ENCODE measurements at regions of chr2 and their contacts with region 1.

Region 1: DNA sequence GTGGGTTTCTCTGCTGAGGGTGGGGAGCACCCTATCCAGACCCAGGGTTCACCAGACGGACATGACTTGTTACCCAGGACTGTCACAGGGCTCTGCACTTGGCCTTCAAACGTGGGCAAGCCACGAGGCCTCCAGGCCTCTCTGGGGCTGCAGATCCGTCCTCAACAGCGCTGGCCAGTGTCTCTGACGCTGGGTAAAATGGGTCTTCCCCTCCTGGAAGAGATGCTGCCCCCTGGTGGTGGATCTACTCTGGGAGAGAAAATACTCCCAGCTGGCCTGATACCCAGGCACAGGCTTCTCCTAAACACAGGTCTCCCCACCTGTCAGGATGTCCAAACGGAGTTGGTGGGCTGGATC is 3.7 kb downstream of the GPR17 start:
- DNase-seq: peak; percentile 60 to 91 (median 79)
- ATAC-seq: peak; percentile 88
- H3K4me3 ChIP-seq: peak overlapping the region; percentile 15
- H3K4me3 Mint-ChIP-seq: peak overlapping the region in 8 of 10 donors; percentile 47 to 78 (median 72)
- H3K27ac ChIP-seq: peak overlapping the region; percentile 18
- H3K27ac Mint-ChIP-seq: peak overlapping the region in 7 of 9 donors; percentile 79 to 92 (median 88)
- H3K4me1 ChIP-seq: peaks cover 0 to 9% of the 10 kb centered on the region in 2 donors
- H3K4me1 Mint-ChIP-seq: peaks cover 10 to 38% (median 29%) of the 10 kb centered on the region in 7 donors
- H3K27me3 ChIP-seq: no peaks in the 10 kb centered on the region
- H3K27me3 Mint-ChIP-seq: no peaks in the 10 kb centered on the region

Region 2: DNA sequence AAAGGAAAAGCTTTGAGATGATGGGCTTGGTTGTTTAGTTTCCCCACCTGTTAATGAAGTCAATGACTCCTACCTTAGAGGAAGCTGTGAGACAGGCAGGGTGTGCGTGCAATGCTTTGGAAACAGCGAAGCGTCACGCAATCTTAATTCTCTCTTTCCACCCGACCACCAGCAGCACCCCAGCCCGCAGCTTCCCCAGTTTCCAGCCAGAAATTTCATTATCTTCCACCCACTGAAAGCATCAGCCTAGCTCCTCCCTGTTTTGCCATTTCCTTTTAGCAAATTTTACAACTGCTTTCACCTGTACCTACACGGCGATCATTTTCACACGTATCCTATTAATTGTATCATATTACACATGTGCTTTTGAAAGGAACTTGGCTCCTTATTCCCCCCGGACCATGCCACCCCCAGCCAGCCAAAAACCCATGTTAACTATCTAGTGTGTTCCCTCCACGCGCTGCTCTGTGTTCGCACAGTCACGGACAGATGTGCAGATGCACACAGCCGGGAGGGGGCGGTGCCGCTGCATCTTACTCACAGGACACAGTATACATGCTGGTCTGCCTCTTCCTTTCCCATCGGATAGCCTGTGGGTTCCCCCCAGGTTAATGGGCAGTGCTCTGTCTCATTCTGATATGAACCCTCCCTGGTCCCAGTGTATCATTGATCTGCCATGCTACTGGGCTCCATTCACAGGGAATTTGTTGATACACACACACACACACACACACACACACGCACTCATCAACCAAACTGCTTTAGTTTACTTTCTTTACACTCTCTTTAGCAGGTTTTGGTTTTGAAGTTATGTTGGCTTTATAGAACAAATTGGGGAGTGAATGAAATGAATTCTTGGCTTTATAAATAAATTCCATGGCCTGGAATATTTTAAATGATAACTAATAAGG is 451.9 kb before region 1 on chr2:
- CTCF ChIA-PET with region 1: interaction called, 3 read pairs
- POLR2A ChIA-PET with region 1: no interaction called
- intact Hi-C with region 1: loop called in 1 of 2 experiments (anchors 1 kb)
- DNase-seq: peak; percentile 15 to 46 (median 32)
- ATAC-seq: peak; percentile 89
- H3K4me3 ChIP-seq: no peak overlapping the region
- H3K4me3 Mint-ChIP-seq: peak overlapping the region; percentile 66 to 85 (median 77)
- H3K27ac ChIP-seq: no peak overlapping the region
- H3K27ac Mint-ChIP-seq: peak overlapping the region in 2 of 9 donors; percentile 10 to 39
- H3K4me1 ChIP-seq: no peaks in the 10 kb centered on the region
- H3K4me1 Mint-ChIP-seq: peaks cover 0 to 5% (median 0%) of the 10 kb centered on the region in 7 donors
- H3K27me3 ChIP-seq: no peaks in the 10 kb centered on the region
- H3K27me3 Mint-ChIP-seq: peaks cover 0 to 4% (median 0%) of the 10 kb centered on the region in 5 donors

Region 3: DNA sequence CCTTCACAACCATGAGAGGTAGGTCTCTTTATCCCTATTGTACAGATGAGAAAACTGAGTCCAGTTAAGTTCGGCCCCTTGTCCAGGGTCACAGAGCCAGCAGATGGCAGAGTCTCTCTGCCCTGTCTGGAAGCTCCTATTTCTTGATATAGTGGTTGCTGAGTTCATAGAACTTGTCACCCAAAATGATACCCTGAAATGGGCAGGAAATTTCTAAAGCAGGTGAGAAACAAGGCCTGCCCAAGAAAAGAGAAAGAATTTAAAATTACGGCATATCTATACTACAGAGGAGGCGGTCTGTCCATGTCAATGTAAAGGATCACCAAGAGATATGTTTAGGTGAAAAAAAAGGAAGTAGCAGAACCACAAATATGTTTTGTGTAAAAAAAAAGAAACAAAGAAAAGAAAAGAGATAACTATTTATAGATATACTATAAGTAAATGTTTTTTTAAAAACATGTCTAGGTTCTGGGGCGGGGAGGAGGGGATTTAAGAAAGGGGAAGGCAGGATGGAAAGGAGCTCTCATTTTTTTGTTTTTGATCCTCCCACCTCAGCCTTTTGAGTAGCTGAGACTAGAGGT is 74.4 kb before region 1 on chr2:
- CTCF ChIA-PET with region 1: interaction called, 3 read pairs
- POLR2A ChIA-PET with region 1: no interaction called
- intact Hi-C with region 1: loop called in 1 of 2 experiments (anchors 1 kb)
- DNase-seq: peak in 3 of 9 donors; percentile 18 to 29 (median 29)
- ATAC-seq: no peak
- H3K4me3 ChIP-seq: no peak overlapping the region
- H3K4me3 Mint-ChIP-seq: peak overlapping the region in 5 of 10 donors; percentile 3 to 55 (median 12)
- H3K27ac ChIP-seq: peak overlapping the region; percentile 40
- H3K27ac Mint-ChIP-seq: peak overlapping the region in 8 of 9 donors; percentile 62 to 85 (median 71)
- H3K4me1 ChIP-seq: peaks cover 0 to 6% of the 10 kb centered on the region in 2 donors
- H3K4me1 Mint-ChIP-seq: peaks cover 13 to 25% (median 19%) of the 10 kb centered on the region in 7 donors
- H3K27me3 ChIP-seq: no peaks in the 10 kb centered on the region
- H3K27me3 Mint-ChIP-seq: peaks cover 0 to 17% (median 0%) of the 10 kb centered on the region in 5 donors

Region 4: GRCh38 chr2:127591221-127591923 is 58.3 kb before region 1 on chr2:
- CTCF ChIA-PET with region 1: interaction called, 141 read pairs
- POLR2A ChIA-PET with region 1: interaction called, 5 read pairs
- intact Hi-C with region 1: loop called (anchors 1 kb)
- DNase-seq: peak; percentile 42 to 79 (median 67)
- ATAC-seq: peak; percentile 92
- H3K4me3 ChIP-seq: no peak overlapping the region
- H3K4me3 Mint-ChIP-seq: no peak overlapping the region
- H3K27ac ChIP-seq: no peak overlapping the region
- H3K27ac Mint-ChIP-seq: peak overlapping the region in 5 of 9 donors; percentile 18 to 69 (median 36)
- H3K4me1 ChIP-seq: no peaks in the 10 kb centered on the region
- H3K4me1 Mint-ChIP-seq: peaks cover 0 to 17% (median 4%) of the 10 kb centered on the region in 7 donors
- H3K27me3 ChIP-seq: no peaks in the 10 kb centered on the region
- H3K27me3 Mint-ChIP-seq: no peaks in the 10 kb centered on the region

Region 5: GRCh38 chr2:127615501-127616166 is 34.0 kb before region 1 on chr2:
- CTCF ChIA-PET with region 1: interaction called, 4 read pairs
- POLR2A ChIA-PET with region 1: no interaction called
- intact Hi-C with region 1: loop called in 1 of 2 experiments (anchors 2 kb)
- DNase-seq: peak in 2 of 9 donors; percentile 16 to 31
- ATAC-seq: no peak
- H3K4me3 ChIP-seq: no peak overlapping the region
- H3K4me3 Mint-ChIP-seq: peak overlapping the region in 9 of 10 donors; percentile 22 to 75 (median 58)
- H3K27ac ChIP-seq: no peak overlapping the region
- H3K27ac Mint-ChIP-seq: peak overlapping the region in 7 of 9 donors; percentile 15 to 81 (median 49)
- H3K4me1 ChIP-seq: peaks cover 0 to 6% of the 10 kb centered on the region in 2 donors
- H3K4me1 Mint-ChIP-seq: peaks cover 8 to 36% (median 31%) of the 10 kb centered on the region in 7 donors
- H3K27me3 ChIP-seq: no peaks in the 10 kb centered on the region
- H3K27me3 Mint-ChIP-seq: peaks cover 0 to 21% (median 0%) of the 10 kb centered on the region in 5 donors

Region 6: GRCh38 chr2:127901339-127902056 is 251.8 kb after region 1 on chr2:
- CTCF ChIA-PET with region 1: no interaction called
- POLR2A ChIA-PET with region 1: no interaction called
- intact Hi-C with region 1: no loop called
- DNase-seq: no peak
- ATAC-seq: no peak
- H3K4me3 ChIP-seq: no peak overlapping the region
- H3K4me3 Mint-ChIP-seq: no peak overlapping the region
- H3K27ac ChIP-seq: no peak overlapping the region
- H3K27ac Mint-ChIP-seq: no peak overlapping the region
- H3K4me1 ChIP-seq: no peaks in the 10 kb centered on the region
- H3K4me1 Mint-ChIP-seq: peaks cover 0 to 3% (median 0%) of the 10 kb centered on the region in 7 donors
- H3K27me3 ChIP-seq: no peaks in the 10 kb centered on the region
- H3K27me3 Mint-ChIP-seq: peaks cover 0 to 15% (median 2%) of the 10 kb centered on the region in 5 donors